ENCODE measurements at regions of chr1 and their contacts with region 1.

Region 1: GRCh38 chr1:6727535-6727934 is 25.9 kb upstream of the DNAJC11 start:
- DNase-seq: peak; percentile 71
- ATAC-seq: peak; percentile 86
- H3K4me3 ChIP-seq: no peak overlapping the region
- H3K27ac ChIP-seq: no peak overlapping the region
- H3K4me1 ChIP-seq: no peaks in the 10 kb centered on the region
- H3K27me3 ChIP-seq: no peaks in the 10 kb centered on the region
- CTCF ChIP-seq: peak; percentile 89

Region 2: DNA sequence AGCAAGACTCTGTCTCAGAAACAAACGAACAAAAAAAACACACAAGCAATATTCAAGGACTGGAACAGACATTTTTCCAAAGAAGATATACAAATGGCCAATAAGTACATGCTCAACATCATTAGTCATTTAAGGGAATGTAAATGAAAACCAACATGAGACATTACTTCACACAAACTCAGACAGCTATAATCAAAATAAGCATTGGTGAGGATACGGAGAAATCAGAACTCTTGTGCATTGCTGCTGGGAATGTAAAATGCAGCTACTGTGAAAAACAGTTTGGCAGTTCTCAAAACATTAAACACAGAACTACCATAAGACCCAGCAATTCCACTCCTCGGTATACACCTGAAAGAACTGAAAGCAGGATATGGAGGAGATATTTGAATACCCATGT is 188.6 kb before region 1 on chr1:
- intact Hi-C with region 1: no loop called
- DNase-seq: no peak
- ATAC-seq: no peak
- H3K4me3 ChIP-seq: no peak overlapping the region
- H3K27ac ChIP-seq: no peak overlapping the region
- H3K4me1 ChIP-seq: no peaks in the 10 kb centered on the region
- H3K27me3 ChIP-seq: no peaks in the 10 kb centered on the region
- CTCF ChIP-seq: no peak

Region 3: GRCh38 chr1:6889875-6890480 is 162.4 kb after region 1 on chr1:
- intact Hi-C with region 1: loop called (anchors 10 kb)
- DNase-seq: no peak
- ATAC-seq: peak; percentile 94
- H3K4me3 ChIP-seq: no peak overlapping the region
- H3K27ac ChIP-seq: no peak overlapping the region
- H3K4me1 ChIP-seq: no peaks in the 10 kb centered on the region
- H3K27me3 ChIP-seq: no peaks in the 10 kb centered on the region
- CTCF ChIP-seq: peak; percentile 79

Region 4: DNA sequence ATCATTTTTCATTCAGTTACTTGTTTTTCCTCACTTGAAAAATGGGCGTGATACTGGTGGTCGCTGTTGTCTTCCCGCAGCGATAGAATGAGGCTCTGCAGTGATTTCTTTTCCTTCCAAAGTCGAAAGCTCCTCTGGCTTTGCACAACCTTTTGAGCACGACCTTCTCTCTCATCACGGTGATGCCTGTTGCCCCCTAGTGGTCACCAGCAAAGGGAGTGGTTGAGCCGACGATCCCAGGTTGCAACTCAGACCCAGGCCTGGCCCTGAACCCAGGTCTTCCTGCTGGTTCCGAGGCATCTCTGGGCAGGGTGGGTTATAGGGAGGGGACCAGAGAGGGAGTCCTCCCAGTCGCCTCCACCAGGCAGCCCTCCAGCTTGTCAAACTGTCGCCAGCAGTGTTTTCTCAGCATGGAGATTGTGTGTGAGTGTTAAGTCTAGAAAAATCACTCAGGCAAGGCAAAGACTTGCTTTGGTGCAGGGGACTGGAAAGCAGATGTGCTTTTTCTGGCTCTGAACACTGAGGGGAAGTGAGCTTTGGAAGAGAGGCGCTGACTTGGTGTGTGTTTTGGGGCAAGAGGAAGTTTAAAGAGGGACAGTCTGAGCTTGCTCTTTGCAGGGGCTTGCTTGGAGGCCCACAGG is 343.0 kb after region 1 on chr1:
- intact Hi-C with region 1: loop called (anchors 10 kb)
- DNase-seq: no peak
- ATAC-seq: peak; percentile 85
- H3K4me3 ChIP-seq: peak overlapping the region; percentile 35
- H3K27ac ChIP-seq: no peak overlapping the region
- H3K4me1 ChIP-seq: peaks cover 5% of the 10 kb centered on the region
- H3K27me3 ChIP-seq: peaks cover 11% of the 10 kb centered on the region
- CTCF ChIP-seq: peak; percentile 83

Region 5: GRCh38 chr1:7207875-7208646 is 480.5 kb after region 1 on chr1:
- intact Hi-C with region 1: no loop called
- DNase-seq: no peak
- ATAC-seq: peak; percentile 88
- H3K4me3 ChIP-seq: no peak overlapping the region
- H3K27ac ChIP-seq: no peak overlapping the region
- H3K4me1 ChIP-seq: no peaks in the 10 kb centered on the region
- H3K27me3 ChIP-seq: peaks cover 11% of the 10 kb centered on the region
- CTCF ChIP-seq: peak; percentile 53

Region 6: DNA sequence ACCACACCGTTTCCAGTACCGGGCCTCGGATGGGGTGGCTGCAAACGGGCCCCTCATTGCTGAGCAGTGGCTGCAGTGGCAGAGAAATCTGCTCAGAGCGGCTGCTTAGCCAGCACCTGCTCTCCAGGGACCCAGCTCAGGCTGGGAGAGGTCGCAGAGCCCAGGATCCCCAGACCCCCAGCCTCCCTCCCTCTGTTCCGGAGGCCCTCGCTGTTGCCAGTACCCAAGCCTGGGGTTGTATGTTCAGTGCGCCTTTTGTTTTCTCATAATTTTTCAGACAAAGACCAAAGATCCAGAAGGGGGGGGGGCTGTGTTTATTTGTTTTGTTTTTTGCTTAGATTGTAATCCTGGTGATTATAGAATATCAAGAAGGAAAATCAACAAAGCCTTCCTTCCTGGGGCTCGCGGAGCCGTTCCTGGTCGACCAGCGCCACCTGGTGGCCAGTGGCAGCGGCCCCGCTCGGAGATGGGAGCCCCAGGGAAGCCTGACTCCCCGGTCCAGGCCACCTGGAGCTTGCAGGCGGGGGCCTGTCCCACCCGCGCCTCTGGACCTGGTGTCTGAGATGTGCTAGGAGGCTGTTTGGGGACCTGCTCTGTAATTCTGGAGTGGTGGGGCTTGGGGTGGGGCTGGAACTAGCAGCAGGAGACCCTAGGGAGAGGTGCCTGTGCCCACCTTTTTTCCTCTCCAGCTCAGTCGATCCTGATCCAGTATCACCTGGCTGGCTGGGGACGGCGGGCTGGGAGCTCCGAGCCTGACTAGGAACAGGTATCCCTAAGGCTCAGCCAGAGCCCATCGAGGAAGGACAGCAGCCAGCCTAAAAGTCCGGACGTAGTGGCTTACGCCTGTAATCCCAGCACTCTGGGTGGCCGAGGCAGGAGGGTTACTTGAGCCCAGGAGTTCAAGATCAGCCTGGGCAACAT is 919.7 kb after region 1 on chr1:
- intact Hi-C with region 1: loop called (anchors 10 kb)
- DNase-seq: peak; percentile 90
- ATAC-seq: peak; percentile 62
- H3K4me3 ChIP-seq: no peak overlapping the region
- H3K27ac ChIP-seq: no peak overlapping the region
- H3K4me1 ChIP-seq: peaks cover 26% of the 10 kb centered on the region
- H3K27me3 ChIP-seq: no peaks in the 10 kb centered on the region
- CTCF ChIP-seq: peak; percentile 94

Measured in upper lobe of right lung (tissue), 1 donor.